Naive thymus-derived CD4-positive, alpha-beta T cell (primary cell): ENCODE measurements at regions of chr11 and their contacts with region 1.

Region 1: DNA sequence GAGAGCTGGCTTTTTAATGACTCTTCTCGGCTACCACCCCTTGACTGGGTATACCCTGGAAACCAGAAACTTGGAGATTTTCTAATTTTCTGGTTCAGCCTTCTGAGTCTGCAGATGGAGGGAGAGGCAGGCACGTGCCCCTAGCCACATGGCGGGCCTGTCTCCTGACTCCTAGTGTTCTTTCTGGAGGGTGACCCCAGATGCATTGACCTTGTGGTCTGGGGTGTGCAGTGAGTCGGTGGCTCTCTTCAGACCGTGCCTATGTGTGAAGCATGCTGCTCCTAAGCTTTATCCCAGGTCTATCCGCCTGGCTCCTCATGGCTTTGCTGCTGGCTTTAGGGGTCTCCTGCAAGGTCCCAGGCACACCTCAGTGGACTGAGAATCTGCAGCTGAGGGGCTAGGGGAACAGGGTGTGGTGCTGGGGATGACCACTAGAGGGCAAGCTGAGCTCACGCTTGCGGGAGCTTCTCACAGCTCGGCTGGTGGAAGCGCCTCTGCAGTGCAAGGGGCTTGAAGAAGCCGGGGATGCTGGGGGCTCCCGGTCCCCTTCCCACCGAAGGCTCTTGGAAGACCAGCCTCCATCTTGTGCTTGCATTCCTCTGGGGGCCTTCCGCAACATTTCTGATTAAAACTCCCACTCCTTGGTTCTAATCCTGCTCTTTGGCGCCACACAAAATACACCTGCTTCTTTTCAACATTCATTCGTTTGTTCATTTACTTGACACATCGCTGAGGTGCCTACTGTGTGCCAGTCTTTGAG is 51.8 kb downstream of the OTOG start:
- DNase-seq: peak; percentile 16 to 72 (median 42)
- ATAC-seq: peak; percentile 79
- H3K4me3 ChIP-seq: no peak overlapping the region
- H3K4me3 Mint-ChIP-seq: no peak overlapping the region
- H3K27ac ChIP-seq: no peak overlapping the region
- H3K27ac Mint-ChIP-seq: no peak overlapping the region
- H3K4me1 ChIP-seq: no peaks in the 10 kb centered on the region
- H3K4me1 Mint-ChIP-seq: peaks cover 0 to 6% (median 0%) of the 10 kb centered on the region in 7 donors
- H3K27me3 ChIP-seq: no peaks in the 10 kb centered on the region
- H3K27me3 Mint-ChIP-seq: peaks cover 0 to 13% (median 0%) of the 10 kb centered on the region in 5 donors

Region 2: GRCh38 chr11:17736930-17737817 is 138.3 kb after region 1 on chr11:
- CTCF ChIA-PET with region 1: no interaction called
- POLR2A ChIA-PET with region 1: no interaction called
- intact Hi-C with region 1: no loop called
- DNase-seq: no peak
- ATAC-seq: no peak
- H3K4me3 ChIP-seq: no peak overlapping the region
- H3K4me3 Mint-ChIP-seq: peak overlapping the region in 3 of 10 donors; percentile 4 to 20 (median 14)
- H3K27ac ChIP-seq: no peak overlapping the region
- H3K27ac Mint-ChIP-seq: no peak overlapping the region
- H3K4me1 ChIP-seq: no peaks in the 10 kb centered on the region
- H3K4me1 Mint-ChIP-seq: peaks cover 0 to 14% (median 8%) of the 10 kb centered on the region in 7 donors
- H3K27me3 ChIP-seq: peaks cover 0 to 6% of the 10 kb centered on the region in 2 donors
- H3K27me3 Mint-ChIP-seq: peaks cover 33 to 56% (median 43%) of the 10 kb centered on the region in 5 donors

Region 3: GRCh38 chr11:17978553-17979287 is 379.8 kb after region 1 on chr11:
- CTCF ChIA-PET with region 1: no interaction called
- POLR2A ChIA-PET with region 1: no interaction called
- intact Hi-C with region 1: loop called in 1 of 2 experiments (anchors 1 kb)
- DNase-seq: peak in 1 of 9 donors; percentile 27
- ATAC-seq: no peak
- H3K4me3 ChIP-seq: no peak overlapping the region
- H3K4me3 Mint-ChIP-seq: no peak overlapping the region
- H3K27ac ChIP-seq: no peak overlapping the region
- H3K27ac Mint-ChIP-seq: peak overlapping the region in 1 of 9 donors; percentile 19
- H3K4me1 ChIP-seq: no peaks in the 10 kb centered on the region
- H3K4me1 Mint-ChIP-seq: peaks cover 0 to 9% (median 5%) of the 10 kb centered on the region in 7 donors
- H3K27me3 ChIP-seq: no peaks in the 10 kb centered on the region
- H3K27me3 Mint-ChIP-seq: no peaks in the 10 kb centered on the region